Mammary epithelial cell (primary cell): ENCODE measurements at regions of chr7 and their contacts with region 1.

Region 1: DNA sequence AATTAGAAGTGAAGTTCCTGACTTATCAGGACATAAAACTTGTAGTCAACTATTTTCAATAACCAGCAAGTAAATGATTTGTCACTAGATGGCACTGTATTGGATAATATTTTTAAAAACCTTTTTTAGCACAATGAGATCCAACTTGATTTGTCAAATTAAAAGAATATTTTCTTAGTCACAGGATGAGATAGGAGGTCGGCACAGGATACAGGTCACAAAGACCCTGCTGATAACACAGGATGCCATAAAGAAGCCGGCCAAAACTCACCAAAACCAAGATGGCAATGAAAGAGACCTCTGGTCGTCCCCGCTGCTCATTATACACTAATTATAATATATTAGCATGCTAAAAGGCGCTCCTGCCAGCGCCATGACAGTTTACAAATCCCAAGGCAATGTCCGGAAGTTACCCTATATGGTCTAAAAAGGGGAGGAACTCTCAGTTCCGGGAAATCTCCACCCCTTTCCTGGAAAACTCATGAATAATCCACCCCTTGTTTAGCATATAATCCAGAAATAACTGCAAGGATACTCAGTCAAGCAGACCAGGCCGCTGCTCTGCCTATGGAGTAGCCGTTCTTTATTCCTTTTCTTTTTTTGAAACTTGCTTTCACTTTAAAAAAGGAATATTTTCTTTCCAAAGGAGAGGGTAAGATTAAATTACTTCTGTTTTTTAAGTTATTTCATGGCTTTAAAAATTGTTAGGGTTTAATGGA is 255.7 kb upstream of the MKLN1 start:
- DNase-seq: peak; percentile 72
- H3K4me3 ChIP-seq: no peak overlapping the region
- H3K27ac ChIP-seq: no peak overlapping the region
- H3K4me1 ChIP-seq: peaks cover 23% of the 10 kb centered on the region
- H3K27me3 ChIP-seq: no peaks in the 10 kb centered on the region
- CTCF ChIP-seq: peak; percentile 42 to 49

Region 2: GRCh38 chr7:130505753-130506152 is 566.2 kb before region 1 on chr7:
- CTCF ChIA-PET with region 1: no interaction called
- dilution Hi-C with region 1: no loop called
- in situ Hi-C with region 1: no loop called
- intact Hi-C with region 1: no loop called
- DNase-seq: no peak
- H3K4me3 ChIP-seq: no peak overlapping the region
- H3K27ac ChIP-seq: no peak overlapping the region
- H3K4me1 ChIP-seq: no peaks in the 10 kb centered on the region
- H3K27me3 ChIP-seq: no peaks in the 10 kb centered on the region
- CTCF ChIP-seq: no peak

Region 3: DNA sequence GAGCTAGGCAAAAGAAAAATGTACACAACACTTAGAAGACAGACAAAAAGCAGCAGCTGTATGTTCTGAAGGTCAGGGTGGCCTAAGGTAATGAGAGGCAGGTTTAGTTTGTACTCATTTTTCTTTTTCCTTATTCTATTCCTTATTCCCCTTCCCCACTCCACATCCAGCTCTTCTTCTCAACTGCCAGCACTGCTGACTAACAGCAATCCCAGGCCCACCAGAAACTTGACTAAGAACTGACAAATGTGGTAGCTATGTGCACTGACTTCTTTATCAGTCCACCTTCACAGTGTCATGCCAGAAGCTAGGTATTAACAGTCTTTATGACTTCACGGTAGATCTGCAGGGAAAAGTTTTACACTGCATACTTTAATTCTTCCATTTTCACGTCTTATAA is 409.5 kb before region 1 on chr7:
- CTCF ChIA-PET with region 1: no interaction called
- dilution Hi-C with region 1: no loop called
- in situ Hi-C with region 1: no loop called
- intact Hi-C with region 1: no loop called
- DNase-seq: no peak
- H3K4me3 ChIP-seq: no peak overlapping the region
- H3K27ac ChIP-seq: no peak overlapping the region
- H3K4me1 ChIP-seq: no peaks in the 10 kb centered on the region
- H3K27me3 ChIP-seq: no peaks in the 10 kb centered on the region
- CTCF ChIP-seq: no peak

Region 4: GRCh38 chr7:130758429-130759056 is 313.4 kb before region 1 on chr7:
- CTCF ChIA-PET with region 1: no interaction called
- dilution Hi-C with region 1: no loop called
- in situ Hi-C with region 1: no loop called
- intact Hi-C with region 1: no loop called
- DNase-seq: peak; percentile 11
- H3K4me3 ChIP-seq: no peak overlapping the region
- H3K27ac ChIP-seq: no peak overlapping the region
- H3K4me1 ChIP-seq: no peaks in the 10 kb centered on the region
- H3K27me3 ChIP-seq: peaks cover 1% of the 10 kb centered on the region
- CTCF ChIP-seq: peak; percentile 57 to 65

Region 5: GRCh38 chr7:131057015-131057793 is 14.7 kb before region 1 on chr7:
- CTCF ChIA-PET with region 1: no interaction called
- dilution Hi-C with region 1: no loop called
- in situ Hi-C with region 1: no loop called
- intact Hi-C with region 1: no loop called
- DNase-seq: peak; percentile 45
- H3K4me3 ChIP-seq: no peak overlapping the region
- H3K27ac ChIP-seq: no peak overlapping the region
- H3K4me1 ChIP-seq: no peaks in the 10 kb centered on the region
- H3K27me3 ChIP-seq: no peaks in the 10 kb centered on the region
- CTCF ChIP-seq: no peak

Region 6: DNA sequence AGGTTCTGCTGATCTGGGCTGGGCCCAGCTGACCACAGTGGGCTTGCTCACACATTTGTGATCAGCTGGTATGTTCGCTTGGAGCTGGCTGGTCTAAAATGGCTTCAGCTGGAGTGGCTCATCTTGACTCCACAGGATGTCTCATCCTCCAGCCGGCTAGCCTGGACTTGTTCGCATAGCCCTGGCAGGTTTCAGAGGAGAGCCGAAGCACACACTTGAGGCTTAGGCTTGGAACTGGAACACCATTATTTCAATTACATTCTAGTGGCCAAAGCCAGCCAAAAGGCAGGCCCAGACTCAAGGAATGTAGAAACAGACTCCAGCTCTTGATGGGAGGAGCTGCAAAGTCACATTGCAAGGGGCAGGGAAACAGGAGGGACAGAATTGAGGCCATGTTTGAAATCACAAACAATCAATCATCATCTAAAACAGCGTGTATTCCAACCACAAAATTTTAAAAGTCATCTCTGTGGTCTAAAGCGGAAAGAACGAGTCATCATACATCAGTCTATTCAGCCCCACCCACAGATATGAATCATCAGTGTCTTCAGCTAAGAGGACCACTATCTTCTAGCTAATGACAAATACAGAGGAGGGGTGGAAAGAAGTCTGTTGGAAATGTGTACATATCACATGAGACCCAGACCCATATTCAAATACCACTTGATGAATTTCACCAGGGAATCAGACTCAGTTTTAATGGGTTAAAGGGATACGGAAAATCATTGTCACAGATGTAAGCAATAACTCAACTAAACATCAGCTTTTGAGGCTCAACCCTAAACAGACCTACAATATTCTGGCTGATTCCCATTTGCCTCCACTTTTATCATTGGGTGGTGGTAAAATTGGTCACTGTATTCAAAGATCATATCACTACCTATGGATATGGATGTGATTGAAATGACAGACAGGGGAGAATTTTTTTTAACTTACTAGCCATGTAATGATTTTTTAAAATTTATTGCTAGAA is 116.7 kb after region 1 on chr7:
- CTCF ChIA-PET with region 1: no interaction called
- dilution Hi-C with region 1: no loop called
- in situ Hi-C with region 1: no loop called
- intact Hi-C with region 1: loop called (anchors 2 kb)
- DNase-seq: peak; percentile 99
- H3K4me3 ChIP-seq: no peak overlapping the region
- H3K27ac ChIP-seq: peak overlapping the region; percentile 84
- H3K4me1 ChIP-seq: peaks cover 30% of the 10 kb centered on the region
- H3K27me3 ChIP-seq: no peaks in the 10 kb centered on the region
- CTCF ChIP-seq: no peak

Region 7: GRCh38 chr7:131302876-131303707 is 231.1 kb after region 1 on chr7:
- CTCF ChIA-PET with region 1: interaction called, 3 read pairs
- dilution Hi-C with region 1: no loop called
- in situ Hi-C with region 1: loop called in 1 of 2 experiments (anchors 25 kb)
- intact Hi-C with region 1: loop called (anchors 1 kb)
- DNase-seq: peak; percentile 38
- H3K4me3 ChIP-seq: no peak overlapping the region
- H3K27ac ChIP-seq: no peak overlapping the region
- H3K4me1 ChIP-seq: no peaks in the 10 kb centered on the region
- H3K27me3 ChIP-seq: no peaks in the 10 kb centered on the region
- CTCF ChIP-seq: peak; percentile 73 to 86

Region 8: GRCh38 chr7:131507592-131508331 is 435.8 kb after region 1 on chr7:
- CTCF ChIA-PET with region 1: no interaction called
- dilution Hi-C with region 1: no loop called
- in situ Hi-C with region 1: no loop called
- intact Hi-C with region 1: loop called (anchors 1 kb)
- DNase-seq: peak; percentile 52
- H3K4me3 ChIP-seq: no peak overlapping the region
- H3K27ac ChIP-seq: no peak overlapping the region
- H3K4me1 ChIP-seq: no peaks in the 10 kb centered on the region
- H3K27me3 ChIP-seq: peaks cover 3% of the 10 kb centered on the region
- CTCF ChIP-seq: peak; percentile 89 to 96